IMR-90 (cell line): ENCODE measurements at regions of chr14 and their contacts with region 1.

Region 1: GRCh38 chr14:64891839-64892375 is 12.2 kb upstream of the SPTB start:
- DNase-seq: peak; percentile 77
- ATAC-seq: peak; percentile 85
- H3K4me3 ChIP-seq: no peak overlapping the region
- H3K27ac ChIP-seq: no peak overlapping the region
- H3K4me1 ChIP-seq: no peaks in the 10 kb centered on the region
- H3K27me3 ChIP-seq: peaks cover 15% of the 10 kb centered on the region
- CTCF ChIP-seq: peak; percentile 68
- POLR2A ChIP-seq: no peak
- RAD21 ChIP-seq: peak; percentile 84

Region 2: GRCh38 chr14:64349741-64350490 is 542.0 kb before region 1 on chr14:
- CTCF ChIA-PET with region 1: no interaction called
- POLR2A ChIA-PET with region 1: no interaction called
- dilution Hi-C with region 1: no loop called
- in situ Hi-C with region 1: loop called (anchors 10 kb)
- intact Hi-C with region 1: no loop called
- DNase-seq: no peak
- ATAC-seq: no peak
- H3K4me3 ChIP-seq: no peak overlapping the region
- H3K27ac ChIP-seq: no peak overlapping the region
- H3K4me1 ChIP-seq: no peaks in the 10 kb centered on the region
- H3K27me3 ChIP-seq: no peaks in the 10 kb centered on the region
- CTCF ChIP-seq: no peak
- POLR2A ChIP-seq: no peak
- RAD21 ChIP-seq: no peak

Region 3: DNA sequence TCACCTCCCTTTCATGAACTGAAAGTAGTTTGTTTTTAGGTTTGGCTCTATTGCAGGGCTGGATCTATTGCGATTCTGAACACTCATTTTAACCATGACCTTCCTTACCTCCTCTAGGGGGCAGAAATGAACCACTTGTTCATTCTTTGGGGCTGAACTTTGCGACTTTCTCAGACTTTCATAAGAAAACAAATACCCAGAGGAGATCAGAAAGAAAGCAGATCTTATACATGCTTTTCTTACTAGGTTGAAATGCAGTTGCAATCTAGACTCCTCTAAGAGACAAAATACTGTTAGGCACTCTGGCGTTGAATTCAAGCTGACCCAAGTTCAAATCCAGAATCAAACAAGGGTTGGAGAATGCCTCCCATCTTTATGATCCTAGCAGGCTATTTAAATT is 220.3 kb before region 1 on chr14:
- CTCF ChIA-PET with region 1: interaction called, 3 read pairs
- POLR2A ChIA-PET with region 1: no interaction called
- dilution Hi-C with region 1: no loop called
- in situ Hi-C with region 1: loop called (anchors 5 kb)
- intact Hi-C with region 1: loop called (anchors 5 kb)
- DNase-seq: peak; percentile 77
- ATAC-seq: peak; percentile 94
- H3K4me3 ChIP-seq: no peak overlapping the region
- H3K27ac ChIP-seq: no peak overlapping the region
- H3K4me1 ChIP-seq: no peaks in the 10 kb centered on the region; the same call in 1 of the 2 replicates
- H3K27me3 ChIP-seq: peaks cover 13% of the 10 kb centered on the region
- CTCF ChIP-seq: peak; percentile 79
- POLR2A ChIP-seq: no peak
- RAD21 ChIP-seq: peak; percentile 88

Region 4: GRCh38 chr14:64801807-64802206 is 90.1 kb before region 1 on chr14:
- CTCF ChIA-PET with region 1: interaction called, 22 read pairs
- POLR2A ChIA-PET with region 1: no interaction called
- dilution Hi-C with region 1: no loop called
- in situ Hi-C with region 1: no loop called
- intact Hi-C with region 1: no loop called
- DNase-seq: peak; percentile 17
- ATAC-seq: peak; percentile 19; the same call in 1 of the 2 replicates
- H3K4me3 ChIP-seq: no peak overlapping the region
- H3K27ac ChIP-seq: no peak overlapping the region
- H3K4me1 ChIP-seq: peaks cover 10% of the 10 kb centered on the region
- H3K27me3 ChIP-seq: peaks cover 13% of the 10 kb centered on the region
- CTCF ChIP-seq: peak; percentile 57
- POLR2A ChIP-seq: no peak
- RAD21 ChIP-seq: peak; percentile 66

Region 5: GRCh38 chr14:64880221-64881121 is 11.4 kb before region 1 on chr14:
- CTCF ChIA-PET with region 1: interaction called, 20 read pairs
- POLR2A ChIA-PET with region 1: no interaction called
- dilution Hi-C with region 1: no loop called
- in situ Hi-C with region 1: no loop called
- intact Hi-C with region 1: no loop called
- DNase-seq: no peak
- ATAC-seq: peak; percentile 64
- H3K4me3 ChIP-seq: no peak overlapping the region; the same call in 1 of the 2 replicates
- H3K27ac ChIP-seq: no peak overlapping the region
- H3K4me1 ChIP-seq: peaks cover 2% of the 10 kb centered on the region; the same call in 1 of the 2 replicates
- H3K27me3 ChIP-seq: peaks cover 81% of the 10 kb centered on the region
- CTCF ChIP-seq: no peak
- POLR2A ChIP-seq: no peak
- RAD21 ChIP-seq: no peak

Region 6: DNA sequence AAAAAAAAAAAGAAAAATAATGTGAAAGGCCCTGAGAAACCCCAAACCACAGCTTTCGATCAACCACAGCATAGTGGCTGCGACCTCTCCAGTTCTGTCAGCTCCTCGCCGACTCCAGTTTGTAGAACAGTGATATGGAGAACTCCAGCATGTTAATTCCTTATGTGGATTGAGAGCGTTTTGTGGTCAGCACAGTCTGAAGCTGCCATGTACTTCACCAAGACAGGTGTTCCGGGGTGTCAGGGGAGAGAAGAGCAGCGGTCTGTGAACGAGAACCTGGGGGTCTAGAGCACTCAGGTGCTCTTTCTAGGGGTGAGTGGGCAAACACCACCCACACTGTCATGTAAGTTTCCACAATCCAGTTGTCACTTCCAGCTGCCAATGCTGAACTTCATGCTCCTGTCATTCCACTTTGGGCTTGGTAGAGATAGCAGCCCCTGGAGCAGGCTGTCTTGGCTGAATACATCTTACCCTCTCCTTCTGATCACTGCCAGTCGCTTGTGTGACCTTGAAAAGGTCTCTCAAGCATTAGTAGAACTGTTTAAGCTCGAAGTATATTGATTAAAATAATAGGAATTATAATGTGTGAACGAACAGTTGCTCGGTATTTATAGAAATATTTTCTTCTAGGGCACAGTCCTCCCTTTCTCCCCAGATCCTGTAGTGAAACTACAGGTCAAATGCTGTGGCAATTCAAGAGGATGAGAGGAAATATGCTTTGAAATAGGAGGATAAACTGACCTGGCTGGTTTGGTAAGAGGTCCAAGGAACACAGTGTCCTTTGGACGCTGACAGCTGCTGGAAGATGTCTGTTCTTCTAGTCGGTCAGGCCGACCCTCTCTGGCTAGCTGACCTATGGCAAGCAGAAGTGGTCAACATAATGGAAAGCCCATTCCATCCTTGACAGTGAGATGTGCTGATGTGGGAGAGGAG is 226.1 kb after region 1 on chr14:
- CTCF ChIA-PET with region 1: no interaction called
- POLR2A ChIA-PET with region 1: no interaction called
- dilution Hi-C with region 1: no loop called
- in situ Hi-C with region 1: no loop called
- intact Hi-C with region 1: no loop called
- DNase-seq: no peak
- ATAC-seq: no peak
- H3K4me3 ChIP-seq: no peak overlapping the region
- H3K27ac ChIP-seq: no peak overlapping the region
- H3K4me1 ChIP-seq: no peaks in the 10 kb centered on the region
- H3K27me3 ChIP-seq: peaks cover 6% of the 10 kb centered on the region
- CTCF ChIP-seq: no peak
- POLR2A ChIP-seq: no peak
- RAD21 ChIP-seq: no peak